ENCODE measurements at regions of chr1 and their contacts with region 1.

Region 1: DNA sequence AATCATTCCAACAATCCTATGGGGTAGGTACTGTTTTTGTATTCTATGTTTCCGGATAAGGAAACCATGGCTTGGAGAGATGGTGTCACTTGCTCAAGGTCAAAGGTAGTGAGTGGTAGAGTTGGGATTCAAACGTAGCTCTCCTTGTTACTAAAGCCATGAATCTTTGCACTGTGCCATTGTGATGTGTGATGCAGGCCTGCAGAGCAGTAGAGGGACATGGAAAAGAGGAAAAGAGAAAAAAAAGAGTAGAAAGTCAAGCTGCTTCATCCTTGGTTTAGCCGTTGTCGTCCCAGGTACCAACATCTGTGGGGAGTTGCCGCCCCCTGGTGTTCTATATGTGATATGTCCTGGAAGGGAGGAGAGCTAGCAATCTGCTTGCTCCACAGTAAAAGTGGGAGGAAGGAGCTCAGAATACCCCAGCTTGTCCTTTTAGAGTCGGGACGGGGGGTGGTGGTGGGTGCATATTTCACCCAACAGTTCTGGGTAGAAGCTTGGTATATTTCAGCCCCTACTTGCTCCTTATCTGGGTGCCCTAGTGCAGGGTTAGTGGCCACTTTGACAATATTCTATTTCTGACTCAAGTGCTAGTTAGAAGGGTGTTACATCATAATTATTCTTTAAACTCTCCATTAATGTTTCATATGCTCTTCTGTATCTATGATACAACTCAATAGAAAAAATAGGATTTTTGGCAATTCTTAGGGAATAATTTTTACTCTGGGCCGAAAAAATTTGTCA is 98.4 kb downstream of the EBNA1BP2 start:
- DNase-seq: peak; percentile 64
- H3K4me3 ChIP-seq: no peak overlapping the region
- H3K27ac ChIP-seq: no peak overlapping the region
- H3K4me1 ChIP-seq: peaks cover 4% of the 10 kb centered on the region
- H3K27me3 ChIP-seq: no peaks in the 10 kb centered on the region
- CTCF ChIP-seq: peak; percentile 76 to 80

Region 2: DNA sequence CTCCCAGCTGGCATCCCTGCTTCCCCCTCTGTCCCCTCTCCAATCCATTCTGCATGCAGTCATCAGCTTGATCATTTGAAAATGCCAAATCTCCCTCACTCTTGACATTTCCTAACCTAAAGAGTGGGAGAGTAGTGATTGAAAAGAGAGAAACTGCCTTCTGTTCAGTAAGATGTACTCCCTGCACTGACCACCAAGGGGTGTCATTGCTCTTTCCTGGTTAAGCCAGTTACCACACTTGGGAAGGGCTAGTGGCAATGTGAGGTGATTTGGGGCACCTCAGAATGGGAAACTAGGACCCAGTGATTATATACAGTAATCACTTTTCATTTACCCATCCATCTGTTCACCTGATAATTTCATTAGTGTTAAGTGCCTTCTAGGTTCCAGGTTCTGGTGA is 295.8 kb before region 1 on chr1:
- CTCF ChIA-PET with region 1: interaction called, 4 read pairs
- dilution Hi-C with region 1: no loop called
- in situ Hi-C with region 1: loop called (anchors 10 kb)
- intact Hi-C with region 1: loop called (anchors 1 kb)
- DNase-seq: no peak
- H3K4me3 ChIP-seq: no peak overlapping the region
- H3K27ac ChIP-seq: no peak overlapping the region
- H3K4me1 ChIP-seq: no peaks in the 10 kb centered on the region
- H3K27me3 ChIP-seq: no peaks in the 10 kb centered on the region
- CTCF ChIP-seq: peak; percentile 77 to 83

Region 3: DNA sequence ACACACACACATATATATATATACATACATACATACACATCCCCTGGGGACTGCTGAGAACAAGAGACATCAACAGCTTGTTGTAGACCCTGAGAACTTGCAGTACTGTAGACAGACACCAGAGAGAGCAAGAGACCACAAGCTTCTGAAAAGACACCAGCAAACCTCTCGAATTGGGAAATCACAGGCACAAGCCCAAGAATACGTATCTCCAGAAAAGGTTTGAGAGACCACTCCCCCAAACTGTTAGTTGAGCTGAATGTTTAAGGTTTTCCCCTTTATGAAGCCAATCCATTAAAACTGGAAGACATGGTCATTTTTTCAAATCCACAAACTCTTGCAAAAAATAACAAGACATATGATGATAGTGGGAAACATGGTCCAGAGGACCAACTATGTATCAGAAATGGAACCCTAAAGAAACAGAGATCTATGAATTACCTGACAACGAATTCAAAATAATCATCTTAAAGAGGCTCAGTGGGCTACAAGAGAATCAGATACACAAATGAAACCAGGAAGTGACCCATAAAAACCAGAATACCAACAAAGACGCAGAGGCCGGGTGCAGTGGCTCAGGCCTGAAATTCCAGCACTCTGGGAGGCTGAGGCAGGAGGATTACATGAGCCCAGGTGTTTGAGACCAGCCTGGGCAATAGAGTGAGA is 160.1 kb before region 1 on chr1:
- CTCF ChIA-PET with region 1: interaction called, 29 read pairs
- dilution Hi-C with region 1: loop called (anchors 10 kb)
- in situ Hi-C with region 1: loop called in 1 of 2 experiments (anchors 5 kb)
- intact Hi-C with region 1: loop called (anchors 1 kb)
- DNase-seq: peak; percentile 63
- H3K4me3 ChIP-seq: no peak overlapping the region
- H3K27ac ChIP-seq: no peak overlapping the region
- H3K4me1 ChIP-seq: no peaks in the 10 kb centered on the region
- H3K27me3 ChIP-seq: no peaks in the 10 kb centered on the region
- CTCF ChIP-seq: peak; percentile 76 to 79

Region 4: DNA sequence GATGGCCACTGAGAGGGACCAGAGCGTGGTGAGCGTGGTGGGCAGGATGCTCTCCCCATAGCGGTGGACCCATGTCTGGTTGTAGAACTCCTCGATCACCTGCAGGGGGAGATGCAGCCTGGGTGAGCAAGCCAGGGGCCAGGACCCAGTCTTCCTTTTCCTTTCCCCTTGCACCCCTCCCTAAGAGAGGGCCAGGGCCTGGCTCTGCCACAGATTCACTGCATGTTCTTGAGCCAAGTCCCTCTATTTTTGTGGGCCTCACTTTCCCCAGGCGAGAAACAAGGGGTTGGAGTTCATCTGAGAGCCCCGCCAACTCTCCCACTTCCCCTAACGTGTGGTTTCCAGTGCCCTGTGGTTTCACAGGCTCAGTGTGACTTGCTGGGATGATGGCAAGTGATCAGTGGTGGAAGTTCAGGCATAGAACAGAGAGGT is 142.5 kb before region 1 on chr1:
- CTCF ChIA-PET with region 1: no interaction called
- dilution Hi-C with region 1: no loop called
- in situ Hi-C with region 1: no loop called
- intact Hi-C with region 1: loop called (anchors 1 kb)
- DNase-seq: peak; percentile 27
- H3K4me3 ChIP-seq: no peak overlapping the region
- H3K27ac ChIP-seq: no peak overlapping the region
- H3K4me1 ChIP-seq: peaks cover 54% of the 10 kb centered on the region
- H3K27me3 ChIP-seq: no peaks in the 10 kb centered on the region
- CTCF ChIP-seq: peak; percentile 39 to 64

Region 5: GRCh38 chr1:43021547-43022474 is 51.8 kb before region 1 on chr1:
- CTCF ChIA-PET with region 1: interaction called, 11 read pairs
- dilution Hi-C with region 1: no loop called
- in situ Hi-C with region 1: no loop called
- intact Hi-C with region 1: no loop called
- DNase-seq: peak; percentile 99
- H3K4me3 ChIP-seq: peak overlapping the region in 1 of 3 experiments; percentile 31
- H3K27ac ChIP-seq: peak overlapping the region; percentile 83
- H3K4me1 ChIP-seq: peaks cover 41% of the 10 kb centered on the region
- H3K27me3 ChIP-seq: no peaks in the 10 kb centered on the region
- CTCF ChIP-seq: no peak

Region 6: DNA sequence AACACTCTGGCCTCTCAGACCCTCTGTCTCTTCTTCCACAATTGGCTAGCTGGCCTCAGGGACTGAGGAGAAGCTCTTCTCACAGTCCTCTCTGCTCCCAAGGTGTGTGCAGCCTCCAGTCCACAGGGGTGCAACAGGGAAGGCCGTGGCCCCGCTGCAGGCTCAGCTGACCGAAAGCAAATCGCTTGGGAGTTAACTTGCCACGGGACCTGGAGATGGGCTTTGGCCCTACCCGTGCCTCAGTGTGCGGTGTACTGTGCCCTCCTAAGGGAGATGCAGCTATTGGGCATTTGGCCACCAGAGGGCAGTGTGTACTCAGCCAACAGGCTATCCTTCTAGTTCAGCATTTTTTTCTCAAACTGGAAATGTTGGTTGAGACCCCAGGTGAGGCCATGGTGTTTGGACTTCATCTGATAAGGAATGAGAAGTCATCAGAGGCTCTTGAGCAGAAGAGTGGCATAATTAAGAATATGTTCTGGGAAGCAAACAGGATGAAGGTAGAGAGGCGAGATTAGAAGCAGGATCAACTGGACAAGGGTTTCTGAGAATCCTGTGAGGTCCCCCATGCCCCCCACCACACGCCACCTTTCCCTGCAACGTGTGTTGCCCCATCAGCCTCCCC is 153.6 kb after region 1 on chr1:
- CTCF ChIA-PET with region 1: no interaction called
- dilution Hi-C with region 1: no loop called
- in situ Hi-C with region 1: no loop called
- intact Hi-C with region 1: loop called (anchors 5 kb)
- DNase-seq: peak; percentile 37
- H3K4me3 ChIP-seq: no peak overlapping the region
- H3K27ac ChIP-seq: no peak overlapping the region
- H3K4me1 ChIP-seq: no peaks in the 10 kb centered on the region
- H3K27me3 ChIP-seq: no peaks in the 10 kb centered on the region
- CTCF ChIP-seq: peak; percentile 93 to 96

Measured in mammary epithelial cell (primary cell).